Common myeloid progenitor, CD34-positive (primary cell): ENCODE measurements at regions of chr3 and their contacts with region 1.

Region 1: GRCh38 chr3:169668957-169669681 is 5.6 kb upstream of the MECOM start:
- DNase-seq: peak; percentile 74 to 81 (median 77)
- H3K4me3 ChIP-seq: peak overlapping the region in 6 of 7 experiments; percentile 54 to 83 (median 75)
- H3K27ac ChIP-seq: no peak overlapping the region
- H3K4me1 ChIP-seq: peaks cover 3 to 34% (median 22%) of the 10 kb centered on the region in 4 experiments
- H3K27me3 ChIP-seq: peaks cover 11 to 48% (median 21%) of the 10 kb centered on the region in 5 experiments

Region 2: DNA sequence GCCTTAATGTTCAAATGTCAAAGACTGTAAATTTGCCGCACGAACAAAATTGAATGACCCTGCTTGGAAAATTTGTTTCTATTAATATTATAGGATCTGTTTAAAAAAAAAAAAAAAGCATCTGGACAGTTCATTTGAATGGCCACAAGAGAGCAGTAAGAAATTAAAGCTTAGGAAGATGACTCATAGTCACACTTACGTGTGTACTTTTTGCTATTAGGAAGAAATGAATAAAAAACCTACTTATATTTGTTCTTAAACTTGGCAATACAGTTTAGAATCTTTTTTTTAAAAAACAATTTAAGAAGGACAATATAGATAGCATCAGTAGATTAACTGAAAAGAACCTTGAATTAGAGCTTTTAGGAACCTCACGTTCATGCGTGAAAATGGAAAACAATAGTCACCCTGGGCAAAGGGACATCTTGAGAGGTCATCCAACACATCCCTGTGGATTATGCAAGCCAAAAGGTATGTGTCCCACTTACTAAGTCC is 627.4 kb before region 1 on chr3:
- CTCF ChIA-PET with region 1: interaction called, 10 read pairs
- POLR2A ChIA-PET with region 1: no interaction called
- DNase-seq: peak; percentile 46 to 79 (median 63)
- H3K4me3 ChIP-seq: no peak overlapping the region
- H3K27ac ChIP-seq: no peak overlapping the region
- H3K4me1 ChIP-seq: peaks cover 0 to 13% (median 6%) of the 10 kb centered on the region in 4 experiments
- H3K27me3 ChIP-seq: no peaks in the 10 kb centered on the region

Region 3: GRCh38 chr3:169133178-169134161 is 535.6 kb before region 1 on chr3:
- CTCF ChIA-PET with region 1: interaction called, 37 read pairs
- POLR2A ChIA-PET with region 1: no interaction called
- DNase-seq: peak in 2 of 3 donors; percentile 66 to 71
- H3K4me3 ChIP-seq: no peak overlapping the region
- H3K27ac ChIP-seq: no peak overlapping the region
- H3K4me1 ChIP-seq: peaks cover 4 to 16% (median 4%) of the 10 kb centered on the region in 4 experiments
- H3K27me3 ChIP-seq: no peaks in the 10 kb centered on the region

Region 4: DNA sequence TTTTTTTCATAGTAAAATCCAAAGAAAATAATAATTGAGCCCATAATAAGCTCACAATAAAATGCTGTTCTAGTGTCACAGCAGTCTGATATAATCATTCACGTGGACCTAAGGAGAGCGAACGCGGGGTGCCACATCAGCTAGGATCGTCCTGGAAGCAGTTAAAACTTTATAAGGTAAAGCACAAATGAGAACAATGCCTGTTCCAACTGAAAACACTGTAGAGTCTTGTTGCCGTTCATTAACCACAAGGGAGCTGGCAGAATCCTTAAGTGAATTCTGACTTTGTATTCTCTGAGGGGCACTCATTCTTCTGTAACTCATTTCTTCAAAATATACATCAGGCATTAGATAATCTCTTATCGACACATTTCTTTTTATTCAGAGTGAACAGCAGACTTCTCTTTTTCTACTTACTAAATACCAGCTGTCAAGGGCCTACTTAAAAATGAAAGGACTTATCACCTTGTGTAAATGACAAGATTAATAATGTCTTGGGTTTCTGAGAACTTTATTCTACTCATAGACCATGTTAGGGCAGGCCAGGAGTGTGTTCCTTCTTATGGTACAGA is 530.2 kb before region 1 on chr3:
- CTCF ChIA-PET with region 1: interaction called, 37 read pairs
- POLR2A ChIA-PET with region 1: no interaction called
- DNase-seq: peak in 2 of 3 donors; percentile 39 to 63
- H3K4me3 ChIP-seq: peak overlapping the region in 5 of 7 experiments; percentile 25 to 66 (median 35)
- H3K27ac ChIP-seq: peak overlapping the region; percentile 29 to 76
- H3K4me1 ChIP-seq: peaks cover 8 to 61% (median 21%) of the 10 kb centered on the region in 4 experiments
- H3K27me3 ChIP-seq: no peaks in the 10 kb centered on the region

Region 5: DNA sequence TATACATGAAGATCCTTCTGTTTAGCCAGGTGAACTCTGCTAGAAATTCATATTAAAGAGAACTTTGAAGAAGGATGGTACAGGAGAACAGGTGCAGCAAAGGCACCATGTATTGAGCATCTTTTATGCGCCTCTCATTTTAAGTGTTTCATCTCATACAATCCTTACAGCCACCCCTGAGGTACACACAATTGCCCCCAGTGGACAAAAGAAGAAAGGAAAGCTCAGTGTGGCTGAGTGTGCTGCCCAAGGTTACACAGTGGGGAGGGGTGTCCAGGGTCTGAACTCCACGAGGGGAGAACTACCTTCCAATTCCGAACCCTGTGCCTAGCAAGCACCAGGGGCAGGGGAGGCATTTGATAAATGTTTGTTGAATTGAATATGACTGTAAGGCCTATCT is 104.2 kb before region 1 on chr3:
- CTCF ChIA-PET with region 1: interaction called, 11 read pairs
- POLR2A ChIA-PET with region 1: no interaction called
- DNase-seq: peak in 2 of 3 donors; percentile 22 to 34
- H3K4me3 ChIP-seq: no peak overlapping the region
- H3K27ac ChIP-seq: no peak overlapping the region
- H3K4me1 ChIP-seq: no peaks in the 10 kb centered on the region
- H3K27me3 ChIP-seq: no peaks in the 10 kb centered on the region

Region 6: DNA sequence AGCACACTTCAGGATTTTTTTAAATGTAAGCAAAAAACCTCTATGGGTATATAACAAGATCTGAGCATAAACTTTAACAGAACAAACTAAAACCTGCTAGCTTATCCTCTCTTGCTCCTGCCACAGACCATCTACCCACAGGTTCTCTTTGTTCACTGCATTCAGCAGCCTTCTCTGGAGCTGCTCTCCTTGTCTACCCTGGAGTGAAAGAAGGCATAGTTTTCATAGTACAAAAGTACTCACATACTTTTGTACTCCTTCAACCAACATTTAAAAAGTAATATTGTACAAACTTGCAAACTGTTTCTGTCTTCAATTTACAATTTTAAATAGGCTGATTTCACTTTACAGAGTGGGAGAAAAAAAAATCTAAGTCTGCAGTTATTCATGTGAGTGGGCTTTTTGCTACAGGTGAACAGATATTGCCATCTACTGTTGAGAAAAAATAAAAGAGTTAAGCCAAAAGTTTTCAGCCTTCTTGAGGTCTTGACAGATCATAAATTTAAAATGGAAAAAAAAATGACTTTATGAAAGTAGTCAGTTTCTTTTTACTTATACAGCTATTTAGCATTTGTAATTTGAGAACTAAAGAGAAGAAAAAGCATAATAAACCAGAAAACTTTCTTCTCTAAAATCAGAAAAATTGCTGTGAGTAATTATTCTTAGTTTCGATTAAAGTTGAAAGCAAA is 75.4 kb after region 1 on chr3:
- CTCF ChIA-PET with region 1: interaction called, 24 read pairs
- POLR2A ChIA-PET with region 1: no interaction called
- DNase-seq: peak; percentile 53 to 74 (median 68)
- H3K4me3 ChIP-seq: no peak overlapping the region
- H3K27ac ChIP-seq: no peak overlapping the region
- H3K4me1 ChIP-seq: peaks cover 0 to 6% (median 2%) of the 10 kb centered on the region in 4 experiments
- H3K27me3 ChIP-seq: no peaks in the 10 kb centered on the region